ENCODE measurements at regions of chr5 and their contacts with region 1.

Region 1: DNA sequence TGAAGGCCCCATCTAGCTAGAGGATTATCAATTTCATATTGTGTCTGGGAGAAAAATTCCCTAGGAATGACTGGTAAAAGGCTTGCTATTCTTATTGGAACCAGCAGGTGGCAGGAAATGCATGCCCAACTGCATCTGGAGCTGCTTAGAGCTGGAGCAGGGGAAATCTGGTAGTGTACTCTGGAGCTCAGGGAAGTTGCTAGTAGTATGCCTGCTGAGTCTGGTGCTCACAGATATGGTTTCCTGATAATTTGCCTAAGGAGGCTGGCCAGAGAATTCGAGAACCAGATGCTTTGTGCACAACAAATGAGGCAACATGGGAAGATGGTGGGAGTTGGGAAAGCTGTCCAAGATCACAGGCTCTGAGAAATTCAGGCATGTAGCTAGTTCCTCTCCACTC is 53.7 kb downstream of the G3BP1 start:
- DNase-seq: no peak
- ATAC-seq: peak; percentile 92

Region 2: DNA sequence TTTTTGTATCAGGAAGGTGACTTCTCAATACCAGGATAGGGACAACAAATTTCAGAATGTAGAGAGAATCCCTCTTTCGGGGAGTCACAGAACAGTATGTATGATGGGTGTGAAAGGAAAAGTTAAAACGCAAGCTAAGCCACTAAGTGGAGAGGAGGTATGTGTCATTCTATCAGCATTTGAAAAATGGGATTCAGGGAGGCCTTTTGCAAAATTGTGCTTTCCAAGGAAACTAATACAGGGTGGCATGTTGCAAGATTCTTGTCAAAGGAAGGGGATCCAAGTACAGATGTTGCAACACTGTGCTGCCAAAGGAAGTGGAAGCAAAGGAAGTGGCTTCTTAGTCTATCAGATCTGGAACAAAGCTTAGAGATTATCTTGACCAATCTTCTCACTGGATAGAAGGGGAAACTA is 732.0 kb before region 1 on chr5:
- intact Hi-C with region 1: no loop called
- DNase-seq: no peak
- ATAC-seq: peak; percentile 61

Region 3: GRCh38 chr5:151740336-151740942 is 85.0 kb before region 1 on chr5:
- intact Hi-C with region 1: no loop called
- DNase-seq: peak; percentile 76
- ATAC-seq: peak; percentile 79

Region 4: GRCh38 chr5:151870820-151871219 is 45.4 kb after region 1 on chr5:
- intact Hi-C with region 1: no loop called
- DNase-seq: no peak
- ATAC-seq: no peak

Region 5: GRCh38 chr5:152142840-152143469 is 317.5 kb after region 1 on chr5:
- intact Hi-C with region 1: loop called (anchors 2 kb)
- DNase-seq: peak; percentile 72
- ATAC-seq: peak; percentile 70

Region 6: GRCh38 chr5:152277936-152278335 is 452.5 kb after region 1 on chr5:
- intact Hi-C with region 1: loop called (anchors 2 kb)
- DNase-seq: no peak
- ATAC-seq: no peak

Region 7: GRCh38 chr5:152349683-152350526 is 524.5 kb after region 1 on chr5:
- intact Hi-C with region 1: loop called (anchors 5 kb)
- DNase-seq: no peak
- ATAC-seq: peak; percentile 75

Region 8: GRCh38 chr5:152514827-152515397 is 689.5 kb after region 1 on chr5:
- intact Hi-C with region 1: loop called (anchors 5 kb)
- DNase-seq: no peak
- ATAC-seq: no peak

Measured in Right ventricle myocardium inferior (tissue), 1 donor.